Common myeloid progenitor, CD34-positive (primary cell): ENCODE measurements at regions of chr13 and their contacts with region 1.

Region 1: DNA sequence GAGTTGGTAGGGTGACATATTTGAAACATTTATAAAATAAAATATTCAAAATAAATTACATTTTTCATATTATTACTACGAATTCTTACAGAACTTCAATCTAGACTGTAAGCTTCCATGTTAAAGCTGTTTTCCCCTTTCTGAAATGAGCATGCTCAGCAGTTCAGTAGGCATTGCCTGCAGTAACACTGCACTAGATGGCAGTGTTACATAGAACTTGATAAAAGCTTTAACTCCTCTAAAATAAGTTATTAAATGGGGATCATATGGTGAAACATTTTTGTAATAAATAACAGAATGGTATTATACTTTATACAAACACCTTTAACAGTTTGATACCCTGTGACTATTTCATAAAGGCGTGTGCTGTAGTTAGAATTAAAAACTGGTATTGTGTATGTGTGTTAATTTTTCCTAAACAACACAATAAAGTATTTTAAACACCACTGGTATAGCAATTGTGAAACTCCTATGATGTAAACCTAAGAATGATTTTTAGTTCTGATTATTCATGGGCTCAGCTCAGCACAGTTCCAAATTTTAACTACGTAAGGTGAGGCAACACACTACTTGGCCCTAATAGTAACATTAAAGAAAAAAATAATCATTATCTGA is 11.6 kb upstream of the GPR18 start:
- DNase-seq: peak; percentile 76 to 86 (median 86)
- H3K4me3 ChIP-seq: no peak overlapping the region
- H3K27ac ChIP-seq: peak overlapping the region in 1 of 2 experiments; percentile 3
- H3K4me1 ChIP-seq: peaks cover 3 to 26% (median 11%) of the 10 kb centered on the region in 4 experiments
- H3K27me3 ChIP-seq: no peaks in the 10 kb centered on the region

Region 2: GRCh38 chr13:99105160-99105559 is 164.6 kb before region 1 on chr13:
- CTCF ChIA-PET with region 1: no interaction called
- POLR2A ChIA-PET with region 1: no interaction called
- DNase-seq: no peak
- H3K4me3 ChIP-seq: no peak overlapping the region
- H3K27ac ChIP-seq: no peak overlapping the region
- H3K4me1 ChIP-seq: no peaks in the 10 kb centered on the region
- H3K27me3 ChIP-seq: peaks cover 0 to 33% (median 13%) of the 10 kb centered on the region in 5 experiments

Region 3: GRCh38 chr13:99176309-99177276 is 93.1 kb before region 1 on chr13:
- CTCF ChIA-PET with region 1: interaction called, 179 read pairs
- POLR2A ChIA-PET with region 1: interaction called, 3 read pairs
- DNase-seq: peak; percentile 60 to 78 (median 71)
- H3K4me3 ChIP-seq: peak overlapping the region in 2 of 7 experiments; percentile 44 to 46
- H3K27ac ChIP-seq: no peak overlapping the region
- H3K4me1 ChIP-seq: peaks cover 0 to 6% (median 4%) of the 10 kb centered on the region in 4 experiments
- H3K27me3 ChIP-seq: peaks cover 0 to 18% (median 5%) of the 10 kb centered on the region in 5 experiments

Region 4: DNA sequence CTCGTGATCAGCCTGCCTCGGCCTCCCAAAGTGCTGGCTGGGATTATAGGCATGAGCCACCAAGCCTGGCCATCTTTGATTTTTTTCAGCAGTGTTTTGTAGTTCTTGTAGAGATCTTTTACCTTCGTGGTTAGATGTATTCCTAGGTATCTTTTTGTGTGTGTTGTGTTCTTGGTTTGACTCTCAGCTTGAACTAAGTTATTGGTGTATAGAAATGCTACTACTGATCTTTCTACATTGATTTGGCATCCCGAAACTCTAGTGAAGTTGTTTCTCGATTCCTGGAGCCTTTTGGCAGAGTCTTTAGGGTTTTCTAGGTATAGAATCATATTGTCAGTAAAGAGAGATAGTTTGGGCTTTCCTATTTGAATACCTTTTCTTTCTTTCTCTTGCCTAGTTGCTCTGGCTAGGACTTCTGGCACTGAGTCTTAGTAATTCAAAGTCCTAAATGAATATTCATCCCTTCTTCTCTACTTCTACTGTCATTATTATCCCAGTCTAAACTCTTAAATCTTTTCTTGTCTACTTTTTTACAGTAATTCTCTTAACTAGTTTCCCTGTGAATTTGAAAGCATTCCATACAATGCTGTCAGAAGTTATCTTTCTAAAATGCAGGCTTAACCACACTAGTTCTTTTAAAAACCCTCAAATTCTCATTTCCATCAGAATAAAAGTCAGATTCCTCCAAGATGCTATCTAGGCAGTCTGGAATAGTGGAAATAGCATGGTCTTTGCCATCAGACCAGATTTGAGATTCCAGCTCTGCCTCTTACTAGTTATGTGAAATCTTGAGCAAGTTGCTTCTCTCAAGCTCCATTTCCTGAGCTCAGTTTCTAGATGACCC is 18.5 kb before region 1 on chr13:
- CTCF ChIA-PET with region 1: interaction called, 23 read pairs
- POLR2A ChIA-PET with region 1: interaction called, 3 read pairs
- DNase-seq: no peak
- H3K4me3 ChIP-seq: no peak overlapping the region
- H3K27ac ChIP-seq: no peak overlapping the region
- H3K4me1 ChIP-seq: no peaks in the 10 kb centered on the region
- H3K27me3 ChIP-seq: no peaks in the 10 kb centered on the region

Region 5: DNA sequence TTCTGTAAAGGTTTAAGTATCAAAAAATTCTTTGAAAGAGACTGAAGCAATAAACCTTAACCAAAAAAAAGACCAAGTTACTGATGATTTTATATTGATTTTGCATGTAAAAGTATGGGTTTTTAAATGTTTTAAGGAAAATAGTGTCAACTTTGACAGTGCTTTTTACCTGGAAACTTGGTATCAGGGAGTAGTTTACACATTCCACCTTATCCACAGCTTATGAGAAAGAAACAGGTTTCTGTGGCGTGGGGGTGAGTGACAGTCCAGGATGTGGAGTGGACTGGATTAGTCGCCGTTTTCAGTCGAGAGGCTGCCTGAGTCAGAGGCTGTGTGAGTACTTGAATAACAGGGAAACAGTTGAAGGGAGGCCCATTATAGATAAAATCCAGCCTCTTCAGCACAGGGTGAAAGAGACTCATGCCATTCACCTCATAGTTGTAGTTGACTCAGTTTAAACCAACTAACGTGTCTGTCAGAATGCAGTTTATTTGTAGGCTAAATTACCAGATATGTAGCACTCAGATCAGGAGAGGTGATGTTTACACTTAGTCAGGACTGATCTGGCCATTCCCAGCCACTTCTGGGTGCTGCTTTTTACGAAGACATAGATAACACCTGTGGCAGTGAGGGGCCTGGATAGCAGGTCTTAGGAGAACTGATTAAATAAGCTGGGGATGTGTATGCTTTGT is 38.1 kb after region 1 on chr13:
- CTCF ChIA-PET with region 1: interaction called, 12 read pairs
- POLR2A ChIA-PET with region 1: interaction called, 3 read pairs
- DNase-seq: peak; percentile 58 to 92 (median 85)
- H3K4me3 ChIP-seq: peak overlapping the region in 1 of 7 experiments; percentile 48
- H3K27ac ChIP-seq: peak overlapping the region; percentile 62 to 83
- H3K4me1 ChIP-seq: peaks cover 5 to 68% (median 41%) of the 10 kb centered on the region in 4 experiments
- H3K27me3 ChIP-seq: no peaks in the 10 kb centered on the region

Region 6: GRCh38 chr13:99366075-99366987 is 96.6 kb after region 1 on chr13:
- CTCF ChIA-PET with region 1: interaction called, 20 read pairs
- POLR2A ChIA-PET with region 1: interaction called, 3 read pairs
- DNase-seq: no peak
- H3K4me3 ChIP-seq: no peak overlapping the region
- H3K27ac ChIP-seq: no peak overlapping the region
- H3K4me1 ChIP-seq: no peaks in the 10 kb centered on the region
- H3K27me3 ChIP-seq: no peaks in the 10 kb centered on the region

Region 7: GRCh38 chr13:99386911-99387788 is 117.4 kb after region 1 on chr13:
- CTCF ChIA-PET with region 1: interaction called, 127 read pairs
- POLR2A ChIA-PET with region 1: no interaction called
- DNase-seq: peak; percentile 76 to 82 (median 77)
- H3K4me3 ChIP-seq: no peak overlapping the region
- H3K27ac ChIP-seq: no peak overlapping the region
- H3K4me1 ChIP-seq: peaks cover 3 to 26% (median 22%) of the 10 kb centered on the region in 4 experiments
- H3K27me3 ChIP-seq: no peaks in the 10 kb centered on the region

Region 8: GRCh38 chr13:99442273-99442895 is 172.7 kb after region 1 on chr13:
- CTCF ChIA-PET with region 1: interaction called, 196 read pairs
- POLR2A ChIA-PET with region 1: interaction called, 12 read pairs
- DNase-seq: peak; percentile 53 to 78 (median 71)
- H3K4me3 ChIP-seq: no peak overlapping the region
- H3K27ac ChIP-seq: no peak overlapping the region
- H3K4me1 ChIP-seq: peaks cover 0 to 2% (median 0%) of the 10 kb centered on the region in 4 experiments
- H3K27me3 ChIP-seq: peaks cover 0 to 3% (median 0%) of the 10 kb centered on the region in 5 experiments